Dorsolateral prefrontal cortex (tissue), 120 donors: ENCODE measurements at regions of chr9 and their contacts with region 1.

Region 1: GRCh38 chr9:130578865-130579737 is at the start of gene FUBP3:
- DNase-seq: peak; percentile 88 to 96 (median 93)
- H3K4me3 ChIP-seq: peak within 1 kb of the TSS; percentile 76 to 100 (median 95)
- H3K27ac ChIP-seq: peak within 1 kb of the TSS in 57 of 59 donors; percentile 61 to 93 (median 82)
- H3K27me3 ChIP-seq: no peaks in the 10 kb centered on the region
- CTCF ChIP-seq: peak in 14 of 56 donors; percentile 11 to 51 (median 27)
- total RNA-seq, gene FUBP3: 35.8 to 75.5 (median 54.0) TPM

Region 2: GRCh38 chr9:130343445-130343918 is 235.6 kb before region 1 on chr9:
- intact Hi-C with region 1: no loop called
- DNase-seq: peak in 3 of 10 donors; percentile 13 to 27 (median 21)
- H3K4me3 ChIP-seq: no peak overlapping the region
- H3K27ac ChIP-seq: no peak overlapping the region
- H3K27me3 ChIP-seq: peaks cover 0 to 6% (median 0%) of the 10 kb centered on the region in 45 donors
- CTCF ChIP-seq: peak in 55 of 56 donors; percentile 34 to 75 (median 63)

Region 3: DNA sequence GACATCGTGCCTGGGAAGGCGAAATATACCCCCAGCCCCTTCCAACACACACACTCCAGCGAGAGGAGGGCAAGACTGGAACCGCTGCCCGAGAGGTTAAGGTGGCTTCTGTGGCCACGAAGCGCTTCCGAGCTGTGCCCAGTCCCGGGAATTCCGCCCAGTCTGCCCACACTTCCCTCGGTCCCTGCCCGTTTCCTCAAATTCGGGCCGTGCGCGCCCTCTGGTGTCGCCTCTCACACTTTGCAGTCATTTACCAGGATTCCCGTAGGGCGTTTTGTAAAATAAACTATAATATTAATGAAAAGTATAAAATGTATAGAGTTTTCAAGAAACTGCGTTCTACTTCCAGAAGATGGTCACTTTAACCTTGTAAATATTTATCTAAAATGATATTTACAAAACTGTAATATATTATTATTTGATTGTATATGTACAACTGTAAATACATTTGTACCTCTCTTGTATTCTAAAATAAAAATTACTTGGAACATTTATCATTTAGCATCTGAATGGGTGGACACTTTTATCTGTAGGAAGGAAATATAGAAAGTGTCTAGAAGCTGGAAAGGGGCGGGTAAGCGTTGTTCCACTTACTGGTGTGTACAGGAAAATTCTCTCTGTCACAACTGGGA is 103.5 kb after region 1 on chr9:
- intact Hi-C with region 1: loop called (anchors 5 kb)
- DNase-seq: peak; percentile 75 to 90 (median 82)
- H3K4me3 ChIP-seq: peak overlapping the region; percentile 26 to 81 (median 68)
- H3K27ac ChIP-seq: peak overlapping the region in 32 of 59 donors; percentile 39 to 92 (median 82)
- H3K27me3 ChIP-seq: no peaks in the 10 kb centered on the region
- CTCF ChIP-seq: peak; percentile 76 to 98 (median 91)

Region 4: GRCh38 chr9:130701056-130702022 is 122.2 kb after region 1 on chr9:
- intact Hi-C with region 1: loop called in 1 of 2 experiments (anchors 5 kb)
- DNase-seq: peak; percentile 51 to 80 (median 73)
- H3K4me3 ChIP-seq: peak overlapping the region in 2 of 59 donors; percentile 2 to 7
- H3K27ac ChIP-seq: peak overlapping the region in 51 of 59 donors; percentile 5 to 80 (median 63)
- H3K27me3 ChIP-seq: no peaks in the 10 kb centered on the region
- CTCF ChIP-seq: peak; percentile 78 to 98 (median 94)

Region 5: GRCh38 chr9:130834371-130835311 is 255.5 kb after region 1 on chr9 and contains the start of gene ABL1:
- intact Hi-C with region 1: loop called in 1 of 2 experiments (anchors 5 kb)
- DNase-seq: peak in 8 of 10 donors; percentile 46 to 74 (median 58)
- H3K4me3 ChIP-seq: peak within 1 kb of the TSS; percentile 55 to 89 (median 78)
- H3K27ac ChIP-seq: peak within 1 kb of the TSS; percentile 85 to 98 (median 95)
- H3K27me3 ChIP-seq: no peaks in the 10 kb centered on the region
- CTCF ChIP-seq: peak in 3 of 56 donors; percentile 17 to 22 (median 18)
- total RNA-seq, gene ABL1: 32.9 to 97.5 (median 48.2) TPM